ENCODE measurements at regions of chr1 and their contacts with region 1.

Region 1: DNA sequence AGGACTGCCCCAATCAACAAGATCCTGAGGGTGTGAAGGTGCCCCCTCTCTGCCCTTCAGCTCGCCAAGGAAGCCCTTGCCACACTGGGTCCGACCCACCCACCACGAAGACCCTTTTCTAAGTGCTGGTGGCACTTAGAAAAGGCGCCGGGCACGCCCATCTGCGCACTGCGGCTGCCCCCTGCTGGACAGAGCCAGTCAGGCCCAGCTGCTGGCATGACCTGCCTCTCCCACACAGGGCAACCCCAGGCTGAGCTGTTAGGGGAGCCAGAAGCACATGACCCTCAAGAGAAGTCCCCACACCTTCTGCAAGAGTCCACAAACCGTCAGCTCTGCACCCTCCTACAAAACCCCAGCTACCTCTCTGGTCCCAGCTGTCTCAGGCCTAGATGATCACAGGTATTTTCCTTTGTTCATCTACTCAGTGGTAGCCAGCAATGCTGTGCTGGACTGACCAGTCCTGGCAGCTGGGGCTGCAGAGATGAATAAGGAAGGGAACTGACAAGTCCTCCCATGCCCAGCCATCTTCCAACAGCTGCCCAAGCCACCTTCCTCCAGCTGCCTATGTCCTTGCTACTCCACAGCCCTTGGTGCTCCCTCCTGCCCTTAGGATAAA is 40.0 kb upstream of the ZC3H12A start:
- DNase-seq: peak; percentile 25
- ATAC-seq: peak; percentile 93
- H3K4me3 ChIP-seq: no peak overlapping the region
- H3K27ac ChIP-seq: no peak overlapping the region
- H3K4me1 ChIP-seq: no peaks in the 10 kb centered on the region
- H3K27me3 ChIP-seq: peaks cover 2% of the 10 kb centered on the region; the same call in 1 of the 2 replicates
- CTCF ChIP-seq: peak; percentile 98

Region 2: DNA sequence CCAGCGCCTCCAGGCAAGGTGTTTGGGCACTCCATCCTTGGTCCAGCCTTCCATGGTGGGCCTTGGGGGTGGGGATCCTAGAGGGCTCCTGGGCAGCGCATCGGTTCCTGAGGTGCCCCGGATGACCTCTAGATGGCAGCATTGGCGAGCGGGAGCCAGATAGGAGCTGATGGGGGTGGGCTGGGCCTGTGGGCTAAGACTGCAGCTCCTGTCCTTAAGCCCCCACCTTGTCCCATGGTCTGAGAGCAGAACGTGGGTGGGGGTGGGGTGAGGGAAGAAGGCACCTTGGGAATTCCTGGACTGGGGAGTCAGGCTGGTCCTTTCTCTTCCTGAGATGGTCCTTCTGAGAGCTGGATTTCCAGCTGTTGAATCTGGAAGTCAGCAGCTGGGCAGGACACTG is 858.3 kb before region 1 on chr1:
- CTCF ChIA-PET with region 1: no interaction called
- POLR2A ChIA-PET with region 1: no interaction called
- in situ Hi-C with region 1: no loop called
- intact Hi-C with region 1: loop called (anchors 5 kb)
- DNase-seq: no peak
- ATAC-seq: peak; percentile 93
- H3K4me3 ChIP-seq: no peak overlapping the region
- H3K27ac ChIP-seq: no peak overlapping the region
- H3K4me1 ChIP-seq: no peaks in the 10 kb centered on the region
- H3K27me3 ChIP-seq: no peaks in the 10 kb centered on the region; the same call in 1 of the 2 replicates
- CTCF ChIP-seq: peak; percentile 96

Region 3: DNA sequence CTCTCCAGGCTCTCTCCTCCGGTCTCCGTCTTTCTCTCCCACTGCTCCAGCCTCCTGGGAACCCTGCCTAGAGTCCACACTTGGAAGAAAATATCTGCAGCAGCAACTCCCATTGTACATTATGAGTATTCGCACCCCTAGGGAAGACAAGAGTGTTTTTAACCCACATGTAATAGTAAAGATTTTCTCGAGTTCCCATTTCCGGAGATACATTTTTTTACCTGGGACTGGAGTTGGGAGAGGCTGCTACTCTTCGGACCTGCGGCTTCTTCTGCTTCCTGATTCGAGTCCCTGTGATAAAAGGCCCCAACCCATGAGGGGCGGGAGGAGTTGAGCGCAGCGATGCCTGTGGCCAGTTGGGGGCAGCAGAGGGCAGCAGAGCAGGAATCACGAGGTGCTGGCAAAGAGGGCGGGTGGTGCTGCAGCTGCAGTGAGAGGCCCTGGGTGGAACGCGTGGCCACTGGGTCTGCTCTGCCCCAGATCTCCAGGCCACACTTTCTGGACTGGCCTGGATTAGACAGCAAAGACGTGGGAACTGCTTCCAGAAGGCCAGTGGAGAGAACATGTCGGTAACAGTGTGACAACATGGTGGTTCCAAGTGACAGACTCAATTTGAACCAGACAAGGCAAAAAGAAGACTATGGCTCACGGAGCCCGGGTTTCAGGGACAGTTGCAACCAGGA is 730.7 kb before region 1 on chr1:
- CTCF ChIA-PET with region 1: no interaction called
- POLR2A ChIA-PET with region 1: no interaction called
- in situ Hi-C with region 1: no loop called
- intact Hi-C with region 1: loop called (anchors 5 kb)
- DNase-seq: peak; percentile 53
- ATAC-seq: peak; percentile 93
- H3K4me3 ChIP-seq: no peak overlapping the region
- H3K27ac ChIP-seq: no peak overlapping the region
- H3K4me1 ChIP-seq: peaks cover 5% of the 10 kb centered on the region; the same call in 1 of the 2 replicates
- H3K27me3 ChIP-seq: peaks cover 17% of the 10 kb centered on the region; the same call in 1 of the 2 replicates
- CTCF ChIP-seq: peak; percentile 97

Region 4: GRCh38 chr1:37458528-37458927 is 24.1 kb after region 1 on chr1:
- CTCF ChIA-PET with region 1: interaction called, 4 read pairs
- POLR2A ChIA-PET with region 1: interaction called, 13 read pairs
- in situ Hi-C with region 1: no loop called
- intact Hi-C with region 1: no loop called
- DNase-seq: no peak
- ATAC-seq: no peak
- H3K4me3 ChIP-seq: no peak overlapping the region
- H3K27ac ChIP-seq: no peak overlapping the region
- H3K4me1 ChIP-seq: peaks cover 4% of the 10 kb centered on the region; the same call in 1 of the 2 replicates
- H3K27me3 ChIP-seq: no peaks in the 10 kb centered on the region
- CTCF ChIP-seq: no peak

Region 5: GRCh38 chr1:38433084-38433722 is 998.8 kb after region 1 on chr1:
- CTCF ChIA-PET with region 1: no interaction called
- POLR2A ChIA-PET with region 1: no interaction called
- in situ Hi-C with region 1: no loop called
- intact Hi-C with region 1: no loop called
- DNase-seq: no peak
- ATAC-seq: no peak
- H3K4me3 ChIP-seq: no peak overlapping the region
- H3K27ac ChIP-seq: no peak overlapping the region
- H3K4me1 ChIP-seq: no peaks in the 10 kb centered on the region
- H3K27me3 ChIP-seq: peaks cover 18% of the 10 kb centered on the region
- CTCF ChIP-seq: no peak